Thyroid gland (tissue), 4 donors: ENCODE measurements at regions of chr9 and their contacts with region 1.

Region 1: DNA sequence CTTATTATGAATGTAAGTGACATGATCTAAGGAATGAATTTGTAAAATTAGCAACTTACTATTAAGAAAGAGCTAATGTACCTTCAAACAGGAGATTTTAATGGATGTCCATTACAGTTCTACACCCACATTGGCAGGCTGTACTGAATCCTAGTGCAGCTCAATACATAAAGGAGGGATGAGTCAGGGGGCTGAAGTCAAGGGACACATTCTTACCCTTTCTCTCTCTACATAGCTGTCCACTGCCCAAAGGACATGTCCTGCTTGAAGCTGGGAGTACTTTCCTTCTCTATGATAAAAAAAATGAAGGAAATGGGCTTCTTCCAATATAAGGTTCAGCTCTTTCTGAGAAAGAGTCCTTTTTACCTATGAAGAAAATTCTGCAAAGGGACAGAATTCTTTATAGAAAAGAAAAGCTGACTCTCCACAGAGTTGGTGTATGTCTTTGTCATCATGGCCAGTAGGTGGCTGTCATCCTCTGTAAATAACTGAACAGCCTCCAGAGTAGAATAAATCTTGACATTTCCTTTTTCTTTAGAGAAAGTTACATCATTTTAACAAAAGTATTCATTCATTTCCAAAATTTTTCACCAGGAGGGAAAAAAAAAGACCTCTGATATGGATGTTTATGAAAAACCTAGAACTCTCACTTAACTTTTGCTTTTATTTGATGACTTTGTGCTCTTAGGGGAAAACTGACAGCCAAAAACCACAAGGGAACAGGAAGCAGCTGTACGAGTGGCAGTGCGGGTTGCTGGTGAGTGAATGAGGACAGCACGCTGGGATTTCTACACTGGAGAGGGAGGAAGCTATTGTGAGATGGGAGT is 13.1 kb upstream of the IFNA14 start:
- DNase-seq: peak; percentile 26 to 27
- H3K4me3 ChIP-seq: no peak overlapping the region
- H3K27ac ChIP-seq: no peak overlapping the region
- H3K4me1 ChIP-seq: no peaks in the 10 kb centered on the region
- H3K27me3 ChIP-seq: no peaks in the 10 kb centered on the region
- CTCF ChIP-seq: peak in 5 of 6 experiments; percentile 27 to 75 (median 62)
- POLR2A ChIP-seq: no peak

Region 2: DNA sequence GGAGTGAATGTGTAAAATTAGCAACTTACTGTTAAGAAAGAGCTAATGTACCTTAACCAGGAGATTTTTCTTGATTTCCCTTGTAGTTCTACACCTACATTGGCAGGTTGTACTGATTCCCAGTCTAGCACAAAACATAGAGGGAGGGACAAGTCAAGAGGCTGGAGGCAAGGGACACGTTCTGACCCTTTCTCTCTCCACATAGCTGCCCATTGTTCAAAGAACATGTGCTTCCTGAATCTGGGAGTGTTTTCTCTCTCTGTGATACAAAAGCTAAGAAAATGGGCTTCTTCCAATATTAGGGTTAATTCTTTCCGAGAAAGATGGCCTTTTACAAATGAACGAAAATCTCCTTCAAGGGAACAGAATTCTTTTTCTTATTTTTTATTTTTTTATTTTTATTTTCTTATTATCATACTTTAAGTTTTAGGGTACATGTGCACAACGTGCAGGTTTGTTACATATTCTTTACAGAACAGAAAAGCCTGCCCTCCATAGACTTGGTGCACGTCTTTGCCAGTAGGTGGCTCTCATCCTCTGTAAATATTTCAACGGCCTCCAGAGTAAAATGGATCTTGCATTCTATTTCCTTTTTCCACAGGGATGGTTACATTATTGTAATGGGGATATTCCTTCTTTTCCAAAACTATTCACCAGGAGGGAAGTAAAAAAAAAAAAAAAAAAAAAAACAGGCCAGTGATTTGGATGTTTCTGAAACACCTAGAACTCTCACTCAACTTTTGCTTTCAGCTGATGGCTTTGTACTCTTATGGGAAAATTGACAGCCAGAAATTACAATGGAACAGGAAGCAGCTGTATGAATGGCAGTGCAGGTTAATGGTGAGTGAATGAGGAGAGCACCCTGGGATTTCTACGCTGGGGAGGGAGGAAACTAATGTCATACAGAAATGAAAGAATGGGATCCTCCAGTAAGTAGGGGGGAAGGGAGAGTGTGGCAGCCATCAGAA is 65.3 kb after region 1 on chr9:
- intact Hi-C with region 1: loop called (anchors 10 kb)
- DNase-seq: peak; percentile 28 to 36
- H3K4me3 ChIP-seq: no peak overlapping the region
- H3K27ac ChIP-seq: no peak overlapping the region
- H3K4me1 ChIP-seq: peaks cover 3 to 11% of the 10 kb centered on the region in 2 donors
- H3K27me3 ChIP-seq: no peaks in the 10 kb centered on the region
- CTCF ChIP-seq: peak in 4 of 6 experiments; percentile 46 to 60 (median 56)
- POLR2A ChIP-seq: no peak

Region 3: DNA sequence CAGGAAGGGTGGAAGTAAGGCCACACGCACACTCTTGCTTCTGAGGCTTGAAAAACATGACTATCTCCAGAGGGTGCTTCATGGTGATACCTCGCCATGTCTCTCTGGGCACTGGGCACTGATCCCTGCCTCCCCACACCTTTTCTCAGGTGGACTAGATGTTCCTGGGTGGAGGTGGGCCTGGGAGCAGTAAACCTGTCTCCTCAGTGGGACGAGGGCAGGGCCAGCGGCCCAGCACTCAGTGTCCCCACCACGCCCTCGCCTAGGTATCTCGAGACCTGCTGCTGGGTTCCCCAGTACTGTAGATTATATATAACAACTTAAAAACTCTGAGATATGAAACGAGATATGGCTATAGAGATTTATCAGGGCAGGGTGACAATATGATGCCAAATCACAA is 109.4 kb after region 1 on chr9:
- intact Hi-C with region 1: no loop called
- DNase-seq: no peak
- H3K4me3 ChIP-seq: no peak overlapping the region
- H3K27ac ChIP-seq: no peak overlapping the region
- H3K4me1 ChIP-seq: no peaks in the 10 kb centered on the region
- H3K27me3 ChIP-seq: no peaks in the 10 kb centered on the region
- CTCF ChIP-seq: no peak
- POLR2A ChIP-seq: no peak

Region 4: GRCh38 chr9:21395778-21396717 is 143.1 kb after region 1 on chr9:
- intact Hi-C with region 1: loop called (anchors 10 kb)
- DNase-seq: peak; percentile 42 to 52
- H3K4me3 ChIP-seq: peak overlapping the region in 1 of 3 donors; percentile 20
- H3K27ac ChIP-seq: no peak overlapping the region
- H3K4me1 ChIP-seq: peaks cover 0 to 5% of the 10 kb centered on the region in 2 donors
- H3K27me3 ChIP-seq: peaks cover 7% of the 10 kb centered on the region
- CTCF ChIP-seq: peak in 5 of 6 experiments; percentile 42 to 77 (median 60)
- POLR2A ChIP-seq: no peak

Region 5: GRCh38 chr9:21616082-21616778 is 363.3 kb after region 1 on chr9:
- intact Hi-C with region 1: no loop called
- DNase-seq: no peak
- H3K4me3 ChIP-seq: no peak overlapping the region
- H3K27ac ChIP-seq: no peak overlapping the region
- H3K4me1 ChIP-seq: no peaks in the 10 kb centered on the region
- H3K27me3 ChIP-seq: no peaks in the 10 kb centered on the region
- CTCF ChIP-seq: no peak
- POLR2A ChIP-seq: no peak